ENCODE measurements at regions of chr2 and their contacts with region 1.

Region 1: DNA sequence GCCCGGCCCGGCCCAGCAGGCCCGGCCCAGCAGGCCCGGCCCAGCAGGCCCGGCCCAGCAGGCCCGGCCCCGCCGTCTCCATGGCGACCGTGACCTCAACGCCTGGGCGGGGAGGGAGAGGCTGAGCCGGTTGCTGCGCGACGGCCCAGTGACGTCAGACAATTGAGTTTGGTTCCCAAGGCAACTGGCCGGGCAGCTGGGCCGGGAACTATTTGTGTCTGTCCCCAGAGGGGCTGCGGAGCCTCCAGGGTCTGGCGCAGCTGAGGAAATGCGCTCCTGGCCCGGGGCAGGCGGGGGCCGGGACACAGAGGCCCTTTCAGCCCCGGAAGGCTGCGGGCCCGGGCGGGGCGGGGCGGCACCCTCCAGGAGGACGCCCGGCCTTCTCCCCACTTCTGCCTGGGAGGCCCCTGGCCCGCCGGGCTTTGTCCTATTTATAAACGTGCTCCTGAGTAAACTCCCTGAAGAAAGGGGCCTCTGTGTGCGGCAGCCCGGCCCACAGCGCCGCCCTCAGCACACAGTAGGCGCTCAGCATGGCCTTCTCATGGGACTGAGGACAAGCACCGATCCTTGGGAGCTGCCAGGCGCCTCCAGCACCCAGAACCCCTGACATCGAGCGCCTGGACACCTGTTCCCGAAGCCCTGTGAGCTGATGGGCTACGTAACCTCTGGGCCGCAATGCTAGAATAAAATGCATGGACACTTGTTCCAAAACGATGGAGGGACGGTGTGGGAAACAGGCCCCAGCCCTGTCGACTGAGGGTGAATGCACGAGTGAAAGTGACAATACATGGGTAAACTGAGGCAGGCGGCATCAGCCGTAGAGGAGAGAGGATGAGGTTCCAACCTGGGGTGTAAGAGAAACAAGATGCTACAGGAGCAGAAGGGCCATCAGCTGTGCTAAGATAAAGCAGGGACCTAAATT is 12.3 kb downstream of the TEX44 start:
- DNase-seq: peak; percentile 100
- H3K4me3 ChIP-seq: peak overlapping the region; percentile 55 to 64 (median 64)
- H3K27ac ChIP-seq: peak overlapping the region; percentile 94 to 100 (median 96)
- H3K4me1 ChIP-seq: peaks cover 48 to 70% (median 68%) of the 10 kb centered on the region in 4 donors
- H3K27me3 ChIP-seq: no peaks in the 10 kb centered on the region
- CTCF ChIP-seq: peak in 1 of 3 experiments; percentile 21
- EP300 ChIP-seq: peak; percentile 79
- POLR2A ChIP-seq: peak; percentile 61

Region 2: DNA sequence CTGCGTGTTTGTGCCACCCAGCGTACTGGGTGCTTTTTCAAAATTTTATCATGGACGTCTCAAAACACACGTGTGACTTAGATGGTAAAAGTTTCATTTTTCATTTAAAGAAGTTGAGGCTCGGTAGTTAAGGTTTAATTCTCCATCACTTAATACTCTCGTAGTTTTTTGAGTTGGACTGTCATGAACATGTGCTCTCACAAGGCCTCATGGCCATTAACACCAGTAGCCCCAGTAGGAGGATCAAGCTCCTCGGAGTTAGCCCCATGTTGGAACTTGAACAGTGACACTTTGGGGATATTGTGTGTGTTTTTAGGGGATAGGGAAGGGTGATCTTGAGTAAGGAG is 90.0 kb before region 1 on chr2:
- intact Hi-C with region 1: loop called (anchors 5 kb)
- DNase-seq: no peak
- H3K4me3 ChIP-seq: peak overlapping the region; percentile 67 to 85 (median 74)
- H3K27ac ChIP-seq: peak overlapping the region; percentile 85 to 90 (median 88)
- H3K4me1 ChIP-seq: peaks cover 5 to 14% (median 9%) of the 10 kb centered on the region in 4 donors
- H3K27me3 ChIP-seq: no peaks in the 10 kb centered on the region
- CTCF ChIP-seq: no peak
- EP300 ChIP-seq: no peak
- POLR2A ChIP-seq: no peak

Region 3: DNA sequence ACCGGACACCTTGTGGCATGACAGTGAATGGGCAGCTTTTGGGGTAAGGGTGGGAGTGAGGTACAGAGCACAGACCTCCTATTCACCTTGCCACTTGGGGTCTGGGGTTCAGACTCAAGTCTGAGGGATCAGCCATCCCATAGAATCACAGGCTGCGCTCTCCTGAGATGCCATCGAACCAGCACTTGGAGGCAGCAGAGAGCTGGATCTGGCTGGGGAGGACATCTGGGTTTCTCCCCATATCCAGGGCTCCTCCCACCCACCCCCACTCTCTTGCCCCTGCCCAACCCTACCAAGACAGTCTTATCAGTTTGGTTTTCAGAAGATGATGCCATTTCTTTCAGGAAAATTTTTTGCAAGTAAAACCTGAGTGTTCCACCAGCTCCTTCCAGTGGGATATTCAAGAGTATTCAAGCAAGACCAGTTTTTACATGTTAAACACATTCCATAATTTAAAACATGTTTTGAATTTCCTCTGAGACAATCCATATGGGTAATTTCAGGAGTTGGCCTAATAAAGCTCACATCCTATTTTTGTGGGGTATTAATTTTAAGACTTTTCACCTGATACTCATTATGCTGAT is 41.5 kb before region 1 on chr2:
- intact Hi-C with region 1: loop called (anchors 2 kb)
- DNase-seq: no peak
- H3K4me3 ChIP-seq: no peak overlapping the region
- H3K27ac ChIP-seq: no peak overlapping the region
- H3K4me1 ChIP-seq: peaks cover 0 to 2% (median 0%) of the 10 kb centered on the region in 4 donors
- H3K27me3 ChIP-seq: no peaks in the 10 kb centered on the region
- CTCF ChIP-seq: peak; percentile 53 to 79 (median 61)
- EP300 ChIP-seq: no peak
- POLR2A ChIP-seq: no peak